Caco-2 (cell line): ENCODE measurements at regions of chr9 and their contacts with region 1.

Region 1: GRCh38 chr9:99819856-99820684 is 1.6 kb upstream of the NR4A3 start:
- DNase-seq: peak; percentile 92 to 94
- H3K4me3 ChIP-seq: peak overlapping the region; percentile 95
- H3K4me3 Mint-ChIP-seq: peak overlapping the region; percentile 72
- H3K27ac Mint-ChIP-seq: peak overlapping the region; percentile 71
- H3K4me1 ChIP-seq: peaks cover 4% of the 10 kb centered on the region
- H3K4me1 Mint-ChIP-seq: peaks cover 7% of the 10 kb centered on the region
- H3K27me3 ChIP-seq: peaks cover 8% of the 10 kb centered on the region
- H3K27me3 Mint-ChIP-seq: peaks cover 3% of the 10 kb centered on the region
- CTCF ChIP-seq: no peak

Region 2: DNA sequence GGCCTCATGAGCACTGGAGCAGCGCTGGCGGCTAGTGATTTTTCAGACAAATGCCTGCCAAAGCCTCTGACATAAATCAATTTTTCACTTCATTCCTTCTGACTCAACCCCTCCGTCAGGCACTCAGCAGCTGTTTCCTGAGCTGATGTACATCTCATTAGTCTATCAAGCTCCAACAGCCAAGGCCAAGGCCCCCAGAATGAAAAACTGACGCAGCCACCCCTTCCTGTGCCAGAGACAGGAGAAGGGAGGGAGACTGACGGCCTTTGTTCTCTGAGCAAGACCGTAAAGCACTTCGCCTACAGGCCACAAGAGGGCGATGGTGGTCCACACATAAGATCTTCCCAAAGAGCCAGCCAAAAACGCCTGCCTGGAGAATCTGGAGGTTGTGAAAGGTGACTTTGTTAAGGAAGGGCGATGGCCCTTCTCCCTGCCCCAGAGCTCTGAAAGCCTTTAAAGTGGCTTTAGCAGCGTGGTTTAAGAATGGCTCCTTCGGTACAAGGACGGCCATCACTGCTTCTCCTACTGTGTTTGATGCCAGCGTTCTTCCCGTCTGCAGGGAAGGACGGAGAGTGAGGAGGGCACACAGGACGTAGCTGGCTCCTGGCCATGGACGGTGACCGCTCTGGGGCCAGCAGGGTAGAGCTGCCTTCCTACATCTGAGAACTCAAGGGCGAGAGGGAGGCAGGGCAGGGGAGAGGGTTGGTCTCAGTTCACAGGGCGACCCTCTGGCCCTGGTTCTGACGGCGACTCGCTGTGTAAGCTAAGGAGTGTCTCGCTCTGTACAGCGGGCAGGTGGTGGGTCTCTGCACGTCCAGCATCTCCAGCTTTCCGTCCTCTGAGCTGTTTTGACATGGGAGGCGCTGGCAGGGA is 635.4 kb before region 1 on chr9:
- CTCF ChIA-PET with region 1: no interaction called
- POLR2A ChIA-PET with region 1: no interaction called
- intact Hi-C with region 1: loop called (anchors 5 kb)
- DNase-seq: peak; percentile 81 to 82
- H3K4me3 ChIP-seq: no peak overlapping the region
- H3K4me3 Mint-ChIP-seq: no peak overlapping the region
- H3K27ac Mint-ChIP-seq: no peak overlapping the region
- H3K4me1 ChIP-seq: peaks cover 11% of the 10 kb centered on the region
- H3K4me1 Mint-ChIP-seq: peaks cover 9% of the 10 kb centered on the region
- H3K27me3 ChIP-seq: no peaks in the 10 kb centered on the region
- H3K27me3 Mint-ChIP-seq: peaks cover 16% of the 10 kb centered on the region
- CTCF ChIP-seq: peak; percentile 93 to 94

Region 3: DNA sequence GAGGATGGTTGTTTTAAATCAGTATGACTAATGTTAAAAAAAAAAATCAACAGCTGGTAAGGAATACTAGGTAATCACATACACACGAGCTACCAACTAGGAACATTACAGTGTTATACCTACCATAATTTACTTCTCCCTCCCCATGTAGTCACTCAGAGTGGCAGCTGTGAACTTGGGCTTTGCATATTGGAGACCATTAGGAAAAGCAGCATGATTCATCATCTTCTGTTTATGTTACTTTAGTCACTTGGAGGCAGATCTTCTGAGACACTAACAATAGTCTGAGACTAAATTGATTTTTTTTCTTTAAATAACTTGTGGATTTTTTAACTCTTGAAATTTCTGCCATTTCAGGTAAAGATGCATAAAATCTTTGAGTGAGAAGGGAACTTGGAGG is 139.9 kb before region 1 on chr9:
- CTCF ChIA-PET with region 1: no interaction called
- POLR2A ChIA-PET with region 1: no interaction called
- intact Hi-C with region 1: no loop called
- DNase-seq: no peak
- H3K4me3 ChIP-seq: no peak overlapping the region
- H3K4me3 Mint-ChIP-seq: no peak overlapping the region
- H3K27ac Mint-ChIP-seq: no peak overlapping the region
- H3K4me1 ChIP-seq: no peaks in the 10 kb centered on the region
- H3K4me1 Mint-ChIP-seq: no peaks in the 10 kb centered on the region
- H3K27me3 ChIP-seq: no peaks in the 10 kb centered on the region
- H3K27me3 Mint-ChIP-seq: no peaks in the 10 kb centered on the region
- CTCF ChIP-seq: no peak

Region 4: GRCh38 chr9:99807276-99807852 is 12.7 kb before region 1 on chr9:
- CTCF ChIA-PET with region 1: no interaction called
- POLR2A ChIA-PET with region 1: no interaction called
- intact Hi-C with region 1: loop called (anchors 1 kb)
- DNase-seq: peak; percentile 55 to 83
- H3K4me3 ChIP-seq: no peak overlapping the region
- H3K4me3 Mint-ChIP-seq: no peak overlapping the region
- H3K27ac Mint-ChIP-seq: peak overlapping the region; percentile 15
- H3K4me1 ChIP-seq: no peaks in the 10 kb centered on the region; the same call in 1 of the 2 replicates
- H3K4me1 Mint-ChIP-seq: peaks cover 19% of the 10 kb centered on the region
- H3K27me3 ChIP-seq: no peaks in the 10 kb centered on the region
- H3K27me3 Mint-ChIP-seq: no peaks in the 10 kb centered on the region
- CTCF ChIP-seq: peak; percentile 79 to 81

Region 5: GRCh38 chr9:99966720-99967119 is 146.7 kb after region 1 on chr9:
- CTCF ChIA-PET with region 1: no interaction called
- POLR2A ChIA-PET with region 1: no interaction called
- intact Hi-C with region 1: loop called (anchors 5 kb)
- DNase-seq: peak; percentile 46 to 53
- H3K4me3 ChIP-seq: no peak overlapping the region
- H3K4me3 Mint-ChIP-seq: no peak overlapping the region
- H3K27ac Mint-ChIP-seq: no peak overlapping the region
- H3K4me1 ChIP-seq: peaks cover 14% of the 10 kb centered on the region
- H3K4me1 Mint-ChIP-seq: peaks cover 7% of the 10 kb centered on the region
- H3K27me3 ChIP-seq: no peaks in the 10 kb centered on the region
- H3K27me3 Mint-ChIP-seq: no peaks in the 10 kb centered on the region
- CTCF ChIP-seq: no peak

Region 6: GRCh38 chr9:100098887-100099721 is 279.0 kb after region 1 on chr9 and contains the starts of genes ERP44 and INVS:
- CTCF ChIA-PET with region 1: no interaction called
- POLR2A ChIA-PET with region 1: no interaction called
- intact Hi-C with region 1: loop called (anchors 2 kb)
- DNase-seq: peak; percentile 98 to 99
- H3K4me3 ChIP-seq: peak within 1 kb of the TSS; percentile 99
- H3K4me3 Mint-ChIP-seq: peak within 1 kb of the TSS; percentile 96
- H3K27ac Mint-ChIP-seq: peak within 1 kb of the TSS; percentile 97
- H3K4me1 ChIP-seq: peaks cover 6% of the 10 kb centered on the region; the same call in 1 of the 2 replicates
- H3K4me1 Mint-ChIP-seq: peaks cover 7% of the 10 kb centered on the region
- H3K27me3 ChIP-seq: no peaks in the 10 kb centered on the region
- H3K27me3 Mint-ChIP-seq: no peaks in the 10 kb centered on the region
- CTCF ChIP-seq: no peak
- total RNA-seq, gene ERP44: 23.9 and 25.6 TPM in 2 replicates
- total RNA-seq, gene INVS: 15.6 and 17.3 TPM in 2 replicates